GM23248 (cell line): ENCODE measurements at regions of chr5 and their contacts with region 1.

Region 1: GRCh38 chr5:159987031-159987674 is 21.8 kb upstream of the TTC1 start:
- DNase-seq: peak; percentile 82
- H3K4me3 ChIP-seq: peak overlapping the region; percentile 70
- H3K27ac ChIP-seq: no peak overlapping the region
- H3K4me1 ChIP-seq: peaks cover 10% of the 10 kb centered on the region
- H3K27me3 ChIP-seq: peaks cover 8% of the 10 kb centered on the region; the same call in 1 of the 2 replicates

Region 2: GRCh38 chr5:159156426-159157238 is 830.5 kb before region 1 on chr5:
- in situ Hi-C with region 1: loop called (anchors 25 kb)
- DNase-seq: peak; percentile 82
- H3K4me3 ChIP-seq: no peak overlapping the region
- H3K27ac ChIP-seq: no peak overlapping the region
- H3K4me1 ChIP-seq: peaks cover 20% of the 10 kb centered on the region
- H3K27me3 ChIP-seq: no peaks in the 10 kb centered on the region

Region 3: GRCh38 chr5:159290741-159291140 is 696.4 kb before region 1 on chr5:
- in situ Hi-C with region 1: loop called (anchors 10 kb)
- DNase-seq: no peak
- H3K4me3 ChIP-seq: no peak overlapping the region
- H3K27ac ChIP-seq: no peak overlapping the region
- H3K4me1 ChIP-seq: no peaks in the 10 kb centered on the region
- H3K27me3 ChIP-seq: no peaks in the 10 kb centered on the region